ENCODE measurements at regions of chr3 and their contacts with region 1.

Region 1: GRCh38 chr3:45321607-45322391 is 66.6 kb upstream of the LARS2 start:
- DNase-seq: peak in 1 of 2 donors; percentile 22
- H3K4me3 ChIP-seq: no peak overlapping the region
- H3K27ac ChIP-seq: no peak overlapping the region
- H3K4me1 ChIP-seq: no peaks in the 10 kb centered on the region
- H3K27me3 ChIP-seq: no peaks in the 10 kb centered on the region
- CTCF ChIP-seq: no peak
- POLR2A ChIP-seq: no peak

Region 2: DNA sequence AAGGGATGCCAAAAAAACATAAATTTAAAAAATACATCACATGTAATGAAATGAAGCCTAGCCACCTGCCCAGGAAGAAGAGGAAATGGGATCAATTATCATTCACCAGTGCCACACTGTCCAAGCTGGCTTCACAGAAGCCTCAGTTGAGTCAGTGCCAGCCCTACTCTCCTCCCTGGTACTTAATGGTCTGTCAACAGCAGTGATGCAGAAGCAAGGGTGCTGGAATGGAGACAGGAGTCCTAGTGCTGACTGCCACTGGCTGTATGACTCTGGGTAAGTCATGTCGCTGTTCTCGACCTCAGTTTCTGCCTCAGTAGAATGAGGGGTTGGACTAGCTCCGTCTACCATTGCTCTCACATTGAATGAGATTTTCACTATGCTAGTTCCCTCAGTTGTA is 11.9 kb before region 1 on chr3:
- intact Hi-C with region 1: loop called (anchors 1 kb)
- DNase-seq: no peak
- H3K4me3 ChIP-seq: no peak overlapping the region
- H3K27ac ChIP-seq: no peak overlapping the region
- H3K4me1 ChIP-seq: no peaks in the 10 kb centered on the region
- H3K27me3 ChIP-seq: no peaks in the 10 kb centered on the region
- CTCF ChIP-seq: no peak
- POLR2A ChIP-seq: no peak

Region 3: DNA sequence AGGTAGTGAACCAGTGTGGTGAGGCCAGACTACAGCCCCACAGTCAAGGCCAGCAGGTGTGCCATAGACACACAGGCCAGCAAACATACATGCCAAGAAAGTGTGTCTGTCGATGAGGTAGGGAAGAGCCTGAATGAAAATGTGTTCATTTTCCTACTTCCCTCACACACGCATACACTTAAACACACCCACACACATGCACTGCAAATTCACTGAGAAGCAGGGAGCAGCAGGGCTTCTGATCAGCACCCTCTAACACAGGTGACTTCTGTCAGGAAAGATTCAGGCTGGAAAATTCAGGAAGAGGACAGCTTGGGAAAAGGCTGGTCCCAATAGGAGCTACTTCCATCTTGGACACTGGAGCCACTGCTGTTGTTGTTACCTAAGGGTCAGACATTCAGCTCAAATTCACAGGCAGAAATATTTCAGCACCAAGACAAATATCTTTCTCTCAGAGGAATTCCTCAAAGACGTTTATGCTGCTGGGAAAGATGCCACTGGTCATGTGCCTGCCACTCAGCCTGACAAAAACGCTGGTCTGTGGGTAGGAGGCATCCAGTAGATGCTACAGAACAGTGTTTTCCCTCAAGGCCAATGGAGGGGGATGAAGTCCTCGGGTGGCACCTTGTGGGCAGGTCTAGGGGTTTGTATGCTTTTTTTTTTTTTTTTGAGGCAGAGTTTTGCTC is 25.7 kb after region 1 on chr3:
- intact Hi-C with region 1: loop called (anchors 1 kb)
- DNase-seq: no peak
- H3K4me3 ChIP-seq: no peak overlapping the region
- H3K27ac ChIP-seq: no peak overlapping the region
- H3K4me1 ChIP-seq: no peaks in the 10 kb centered on the region
- H3K27me3 ChIP-seq: no peaks in the 10 kb centered on the region
- CTCF ChIP-seq: no peak
- POLR2A ChIP-seq: no peak

Measured in breast epithelium (tissue), 4 donors.